ENCODE measurements at regions of chr11 and their contacts with region 1.

Region 1: DNA sequence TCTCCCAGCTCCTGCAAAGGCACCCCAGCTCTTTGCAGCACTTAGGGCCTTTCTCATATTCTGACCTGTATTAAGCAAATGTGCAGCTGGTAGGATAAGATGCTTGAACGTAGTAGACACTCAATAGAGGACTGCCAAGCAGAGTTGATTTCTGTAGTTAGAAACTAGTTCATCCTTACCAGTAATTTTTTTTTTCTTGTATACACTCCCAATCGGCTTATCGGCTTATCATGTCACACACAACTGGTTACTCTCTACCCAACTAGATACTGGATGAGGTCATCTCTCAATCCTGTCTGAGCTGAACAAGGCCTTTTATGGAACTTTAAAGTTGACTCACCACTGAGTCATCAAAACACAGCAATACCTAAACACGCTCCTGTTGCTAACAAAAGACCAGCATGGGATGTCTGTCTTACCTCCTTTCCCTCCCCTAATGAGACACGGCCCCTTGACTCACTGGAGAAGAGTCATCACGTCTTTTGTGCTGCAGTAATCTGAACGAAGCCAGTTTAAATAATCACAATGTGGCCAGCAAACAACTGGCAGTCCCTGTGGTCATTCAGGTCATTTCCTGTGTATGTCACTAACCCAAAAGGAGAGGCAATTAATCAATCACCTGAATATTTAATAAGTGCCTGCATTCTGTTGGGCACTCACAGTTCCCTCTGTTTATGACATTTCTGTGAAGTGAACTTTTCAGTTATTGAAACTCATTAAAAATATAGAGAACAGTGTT is 7.5 kb upstream of the WEE1 start:
- DNase-seq: peak in 3 of 5 donors; percentile 42 to 82 (median 56)
- H3K4me3 ChIP-seq: no peak overlapping the region
- H3K27ac ChIP-seq: peak overlapping the region; percentile 46 to 62
- H3K4me1 ChIP-seq: peaks cover 9% of the 10 kb centered on the region
- H3K27me3 ChIP-seq: no peaks in the 10 kb centered on the region
- CTCF ChIP-seq: no peak
- EP300 ChIP-seq: peak; percentile 70
- POLR2A ChIP-seq: no peak

Region 2: GRCh38 chr11:9643751-9644150 is 77.8 kb after region 1 on chr11:
- intact Hi-C with region 1: no loop called
- DNase-seq: no peak
- H3K4me3 ChIP-seq: no peak overlapping the region
- H3K27ac ChIP-seq: no peak overlapping the region
- H3K4me1 ChIP-seq: no peaks in the 10 kb centered on the region
- H3K27me3 ChIP-seq: no peaks in the 10 kb centered on the region
- CTCF ChIP-seq: no peak
- EP300 ChIP-seq: no peak
- POLR2A ChIP-seq: no peak

Region 3: DNA sequence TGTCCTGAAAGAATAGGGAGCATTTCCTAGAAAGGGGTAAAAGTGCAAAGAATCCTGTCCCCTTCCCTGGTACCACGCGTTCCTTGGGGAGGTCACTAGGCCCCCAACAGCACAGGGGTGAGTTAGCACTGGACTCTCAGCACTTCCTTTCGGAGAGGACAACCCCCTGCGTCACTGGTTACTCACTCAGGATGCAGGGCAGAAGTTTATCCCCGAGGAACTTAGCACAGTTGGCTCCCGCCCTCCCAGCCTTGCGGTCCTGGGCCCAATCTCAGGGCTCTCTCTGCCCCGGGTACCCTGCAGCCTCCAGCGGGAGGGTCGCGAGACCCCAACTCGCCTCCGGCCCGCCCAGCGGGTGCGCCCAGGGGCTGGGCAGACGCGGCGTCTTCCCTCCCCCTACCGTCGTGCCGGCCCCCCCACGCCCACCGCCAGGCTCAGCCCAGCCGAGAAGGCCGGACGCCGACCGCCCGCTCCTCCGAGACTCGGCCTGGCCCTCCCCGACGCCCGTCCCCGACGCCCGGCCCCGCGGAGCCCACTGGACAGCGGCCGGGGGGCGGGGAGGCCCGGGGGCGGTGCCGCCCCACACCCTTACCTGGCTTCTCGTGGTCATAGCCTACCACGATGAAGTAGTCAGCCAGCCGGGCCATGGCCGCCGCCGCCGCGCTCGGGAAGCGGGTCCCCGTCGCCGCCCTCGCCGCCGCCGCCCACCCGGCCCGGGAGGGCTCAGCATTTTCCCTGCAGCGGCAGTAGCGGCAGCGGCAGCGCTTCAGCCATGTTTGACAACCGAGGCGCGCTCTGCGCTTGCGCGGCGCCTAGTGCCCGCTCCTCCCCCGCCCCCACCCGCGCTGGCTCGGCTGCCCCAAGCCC is 727.7 kb after region 1 on chr11 and contains the start of gene SBF2:
- intact Hi-C with region 1: loop called in 1 of 4 experiments (anchors 5 kb)
- DNase-seq: peak; percentile 85 to 93 (median 89)
- H3K4me3 ChIP-seq: peak within 1 kb of the TSS; percentile 87
- H3K27ac ChIP-seq: peak within 1 kb of the TSS; percentile 96
- H3K4me1 ChIP-seq: peaks cover 14% of the 10 kb centered on the region
- H3K27me3 ChIP-seq: no peaks in the 10 kb centered on the region
- CTCF ChIP-seq: no peak
- EP300 ChIP-seq: no peak
- POLR2A ChIP-seq: peak; percentile 67
- total RNA-seq, gene SBF2: 46.7 to 77.5 (median 52.6) TPM

Measured in ovary (tissue), 10 donors.